Natural killer cell (primary cell): ENCODE measurements at regions of chr3 and their contacts with region 1.

Region 1: DNA sequence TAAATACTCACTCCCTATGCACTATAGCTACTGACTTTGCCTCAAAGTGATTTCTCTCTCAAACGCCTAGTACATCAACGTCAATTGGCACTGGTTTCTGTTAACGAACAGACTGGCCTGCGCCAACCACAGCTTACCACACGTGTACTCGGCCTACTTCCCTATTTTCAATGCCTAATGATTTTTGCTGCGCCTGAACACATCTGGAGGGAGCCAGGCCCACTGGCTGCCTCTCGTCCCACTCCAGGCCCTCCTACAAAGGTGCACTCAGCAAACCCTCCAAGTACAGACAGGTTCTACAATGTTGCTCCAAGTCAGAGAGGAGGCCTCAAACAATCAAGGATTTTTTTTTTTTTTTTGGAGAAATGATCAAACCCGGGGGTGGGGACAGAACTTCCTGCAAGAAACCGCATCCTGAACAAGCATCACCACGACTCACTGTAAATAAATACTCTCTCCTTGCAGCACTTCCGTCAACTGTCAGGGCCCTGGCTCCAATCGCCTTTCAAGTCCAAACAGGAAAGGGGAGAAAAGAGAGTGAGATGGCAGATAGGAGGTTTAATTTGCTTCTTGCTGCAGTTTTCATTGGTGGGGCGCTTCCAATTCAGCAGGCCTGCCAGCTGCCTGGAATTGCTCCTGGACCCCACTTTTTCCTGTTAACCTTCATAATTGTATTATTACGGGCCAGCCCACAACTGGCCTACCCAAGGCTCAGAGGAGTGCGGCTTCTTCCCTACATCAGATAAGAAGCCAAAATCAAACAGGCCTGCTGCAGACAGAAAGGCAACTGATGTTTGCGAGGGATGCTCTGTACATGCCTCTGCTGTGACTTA is 139.3 kb downstream of the FOXP1 start:
- DNase-seq: peak; percentile 48 to 94
- ATAC-seq: peak; percentile 78 to 88 (median 84)
- H3K4me3 ChIP-seq: no peak overlapping the region
- H3K4me3 Mint-ChIP-seq: peak overlapping the region; percentile 78
- H3K27ac ChIP-seq: peak overlapping the region; percentile 93
- H3K27ac Mint-ChIP-seq: peak overlapping the region; percentile 93 to 96
- H3K4me1 ChIP-seq: peaks cover 81% of the 10 kb centered on the region
- H3K4me1 Mint-ChIP-seq: peaks cover 71 to 75% of the 10 kb centered on the region in 2 donors
- H3K27me3 ChIP-seq: no peaks in the 10 kb centered on the region
- H3K27me3 Mint-ChIP-seq: no peaks in the 10 kb centered on the region
- CTCF ChIP-seq: no peak

Region 2: DNA sequence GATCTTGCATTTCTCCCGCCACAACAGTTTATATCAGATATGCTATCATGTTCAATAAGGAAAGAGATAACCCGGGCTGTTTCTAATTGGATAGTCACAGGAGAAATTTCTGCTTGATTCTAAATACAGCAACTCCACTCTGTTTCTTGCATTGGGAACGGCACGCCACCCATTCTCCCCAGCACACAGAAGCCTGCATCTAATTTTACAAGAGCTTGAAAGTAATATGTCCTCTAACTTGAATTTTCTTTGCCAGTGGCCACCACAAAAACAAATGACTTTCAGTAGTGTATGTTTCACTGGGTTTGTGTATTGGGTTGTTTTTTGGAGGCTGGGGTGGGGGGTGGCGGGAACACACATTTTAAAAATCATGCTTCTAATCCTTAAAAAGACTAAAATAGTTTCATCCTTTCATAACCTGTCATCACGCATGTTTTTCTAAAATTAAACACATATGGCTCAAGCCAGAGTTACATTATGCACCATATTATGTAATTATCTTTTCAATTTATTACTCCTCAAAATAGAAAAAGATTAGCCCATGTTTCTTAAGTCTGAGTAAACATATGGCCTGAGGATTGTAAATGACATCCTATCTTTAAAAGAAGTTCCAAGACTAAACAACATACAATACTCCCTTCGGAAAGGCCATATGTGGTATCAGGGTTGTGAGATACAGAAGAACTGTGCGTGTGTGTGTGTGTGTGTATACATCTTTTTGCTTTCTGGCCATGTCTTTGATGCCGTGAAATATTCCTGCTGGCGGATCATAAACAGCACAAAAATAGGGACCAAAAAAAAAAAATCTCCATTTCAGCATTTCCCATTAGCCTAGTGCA is 37.1 kb before region 1 on chr3:
- intact Hi-C with region 1: no loop called
- DNase-seq: no peak
- ATAC-seq: no peak
- H3K4me3 ChIP-seq: no peak overlapping the region
- H3K4me3 Mint-ChIP-seq: no peak overlapping the region
- H3K27ac ChIP-seq: no peak overlapping the region
- H3K27ac Mint-ChIP-seq: no peak overlapping the region
- H3K4me1 ChIP-seq: no peaks in the 10 kb centered on the region
- H3K4me1 Mint-ChIP-seq: peaks cover 0 to 5% of the 10 kb centered on the region in 2 donors
- H3K27me3 ChIP-seq: no peaks in the 10 kb centered on the region
- H3K27me3 Mint-ChIP-seq: no peaks in the 10 kb centered on the region
- CTCF ChIP-seq: no peak

Region 3: GRCh38 chr3:71421820-71422566 is 22.3 kb before region 1 on chr3:
- intact Hi-C with region 1: loop called (anchors 1 kb)
- DNase-seq: peak; percentile 28 to 79
- ATAC-seq: peak; percentile 92 to 94 (median 93)
- H3K4me3 ChIP-seq: no peak overlapping the region
- H3K4me3 Mint-ChIP-seq: peak overlapping the region; percentile 70
- H3K27ac ChIP-seq: peak overlapping the region; percentile 91
- H3K27ac Mint-ChIP-seq: peak overlapping the region; percentile 93 to 95
- H3K4me1 ChIP-seq: peaks cover 26% of the 10 kb centered on the region
- H3K4me1 Mint-ChIP-seq: peaks cover 47 to 56% of the 10 kb centered on the region in 2 donors
- H3K27me3 ChIP-seq: no peaks in the 10 kb centered on the region
- H3K27me3 Mint-ChIP-seq: no peaks in the 10 kb centered on the region
- CTCF ChIP-seq: no peak